ENCODE measurements at regions of chr19 and their contacts with region 1.

Region 1: DNA sequence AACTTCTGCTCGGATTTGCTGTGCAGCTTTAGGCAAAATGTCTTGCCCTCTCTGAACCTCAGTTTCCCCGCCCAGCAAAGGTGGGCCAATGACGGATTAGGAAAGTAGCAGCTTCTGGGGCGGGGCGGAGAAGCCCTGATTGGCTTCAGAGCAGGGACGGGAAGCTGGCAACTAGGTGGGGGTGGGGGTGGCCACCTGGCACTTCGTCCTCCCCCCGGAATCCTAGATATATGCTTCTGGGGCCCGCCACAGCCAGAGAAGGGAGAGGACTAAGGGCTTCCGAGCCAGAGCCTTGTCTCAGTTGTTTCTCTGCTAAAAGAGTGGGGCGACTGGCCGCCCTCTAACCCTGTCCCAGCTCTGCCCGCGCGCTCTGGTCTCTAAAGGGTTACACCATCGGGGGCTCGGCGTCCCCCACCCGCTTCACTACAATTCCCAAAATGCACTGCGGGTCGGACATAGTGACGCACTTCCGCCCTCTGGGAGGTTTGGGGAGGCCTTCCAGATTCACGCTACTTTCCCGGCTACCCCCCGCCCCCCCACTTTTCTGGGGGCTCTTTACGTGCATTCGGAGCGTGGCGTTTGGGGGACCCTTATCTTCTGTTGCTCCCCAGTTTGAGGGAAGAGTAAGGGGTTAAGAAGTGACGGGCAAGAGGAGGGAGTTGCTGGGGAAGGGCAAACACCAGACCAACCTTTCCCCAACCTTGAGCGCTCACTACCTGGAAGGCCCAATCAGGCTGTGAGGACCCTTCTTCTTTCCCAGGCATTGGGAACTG is 672 bp upstream of the IRF2BP1 start:
- DNase-seq: peak; percentile 82 to 89
- ATAC-seq: peak; percentile 89 to 91
- H3K4me3 ChIP-seq: peak overlapping the region; percentile 63 to 84 (median 66)
- H3K27ac ChIP-seq: peak overlapping the region; percentile 86 to 95 (median 92)
- H3K4me1 ChIP-seq: peaks cover 34 to 43% of the 10 kb centered on the region in 2 donors
- H3K27me3 ChIP-seq: no peaks in the 10 kb centered on the region
- CTCF ChIP-seq: peak in 1 of 5 experiments; percentile 11
- POLR2A ChIP-seq: peak; percentile 49 to 63

Region 2: GRCh38 chr19:45817010-45817724 is 69.4 kb before region 1 on chr19:
- in situ Hi-C with region 1: no loop called
- intact Hi-C with region 1: loop called (anchors 2 kb)
- DNase-seq: peak; percentile 78 to 88
- ATAC-seq: peak; percentile 85 to 95
- H3K4me3 ChIP-seq: no peak overlapping the region
- H3K27ac ChIP-seq: no peak overlapping the region
- H3K4me1 ChIP-seq: peaks cover 0 to 3% of the 10 kb centered on the region in 2 donors
- H3K27me3 ChIP-seq: peaks cover 0 to 11% (median 5%) of the 10 kb centered on the region in 3 donors
- CTCF ChIP-seq: peak; percentile 87 to 96 (median 92)
- POLR2A ChIP-seq: no peak

Region 3: GRCh38 chr19:45862564-45863334 is 23.9 kb before region 1 on chr19 and contains the start of gene SYMPK:
- in situ Hi-C with region 1: no loop called
- intact Hi-C with region 1: loop called (anchors 1 kb)
- DNase-seq: peak; percentile 98 to 99
- ATAC-seq: peak; percentile 99
- H3K4me3 ChIP-seq: peak within 1 kb of the TSS; percentile 62 to 95 (median 86)
- H3K27ac ChIP-seq: peak within 1 kb of the TSS; percentile 85 to 95 (median 90)
- H3K4me1 ChIP-seq: peaks cover 17 to 22% of the 10 kb centered on the region in 2 donors
- H3K27me3 ChIP-seq: peaks cover 10 to 16% (median 10%) of the 10 kb centered on the region in 3 donors
- CTCF ChIP-seq: no peak
- POLR2A ChIP-seq: peak; percentile 62 to 82
- total RNA-seq, gene SYMPK: 14.1 to 64.6 (median 34.9) TPM

Region 4: DNA sequence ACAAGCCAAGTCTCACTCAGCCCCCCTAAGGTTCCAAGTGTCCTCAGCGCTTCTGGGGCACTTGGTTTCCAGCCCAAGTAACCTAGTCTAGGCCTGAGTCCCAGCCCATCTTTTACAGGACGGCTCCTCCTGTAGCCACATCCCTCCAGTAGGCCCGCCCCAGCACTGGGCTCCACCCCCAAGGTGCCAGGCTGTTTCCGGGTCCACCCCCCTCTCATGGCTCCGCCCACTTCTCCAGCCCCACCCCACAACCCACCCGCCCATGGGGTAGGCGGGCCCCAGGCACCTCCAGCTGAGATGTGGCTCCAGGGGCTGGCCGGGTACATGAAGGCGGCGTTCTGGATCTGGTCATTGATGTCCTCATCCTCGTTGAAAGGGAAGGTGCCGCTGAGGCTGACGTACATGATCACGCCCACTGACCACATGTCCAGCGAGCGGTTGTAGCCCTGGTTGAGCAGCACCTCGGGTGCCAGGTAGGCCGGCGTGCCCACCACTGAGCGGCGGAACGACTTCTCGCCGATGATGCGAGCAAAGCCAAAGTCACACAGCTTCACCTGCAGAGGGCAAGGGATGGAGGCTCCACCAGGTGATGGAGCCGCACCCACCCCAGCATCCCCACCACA is 791.6 kb after region 1 on chr19:
- in situ Hi-C with region 1: no loop called
- intact Hi-C with region 1: no loop called
- DNase-seq: no peak
- ATAC-seq: no peak
- H3K4me3 ChIP-seq: no peak overlapping the region
- H3K27ac ChIP-seq: no peak overlapping the region
- H3K4me1 ChIP-seq: no peaks in the 10 kb centered on the region
- H3K27me3 ChIP-seq: no peaks in the 10 kb centered on the region
- CTCF ChIP-seq: no peak
- POLR2A ChIP-seq: no peak

Region 5: DNA sequence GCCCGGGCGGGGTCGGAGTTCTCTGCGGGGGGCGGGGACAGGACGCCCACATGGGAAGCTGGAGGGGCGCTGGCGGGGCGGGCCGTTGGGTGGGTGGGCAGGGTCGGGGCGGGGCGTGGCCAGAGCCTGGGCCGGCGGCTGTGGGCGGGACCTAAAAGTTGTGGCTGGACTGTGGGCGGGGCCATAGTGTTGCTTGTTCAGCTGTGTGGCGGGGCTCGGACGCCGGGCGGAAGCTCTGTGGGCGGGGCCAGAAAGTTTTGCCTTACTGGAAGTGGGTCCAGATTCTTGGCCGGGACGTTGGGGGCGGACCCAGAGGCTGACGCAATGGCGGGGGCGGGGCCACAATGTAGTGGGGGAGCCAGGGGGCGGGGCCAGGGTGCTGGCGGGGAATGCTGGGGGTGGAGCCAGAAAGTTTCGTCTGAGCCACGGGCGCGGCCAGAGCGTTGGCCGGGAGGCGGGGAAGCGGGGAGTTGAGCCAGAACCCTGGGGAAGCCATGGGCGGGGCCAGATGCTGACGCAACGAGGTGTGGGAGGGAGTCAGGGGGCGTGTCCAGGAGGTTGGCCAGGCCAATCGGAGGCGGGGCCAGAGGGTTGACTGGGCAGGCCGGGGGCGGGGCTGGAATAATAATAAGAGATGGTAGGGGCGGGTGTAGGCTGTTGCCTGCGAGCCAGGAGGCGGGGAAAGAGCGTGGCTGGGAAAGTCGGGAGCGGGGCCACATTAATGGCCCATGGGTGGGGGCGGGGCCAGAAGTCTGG is 1370.3 kb after region 1 on chr19:
- in situ Hi-C with region 1: no loop called
- intact Hi-C with region 1: loop called (anchors 1 kb)
- DNase-seq: peak; percentile 100
- ATAC-seq: peak; percentile 78 to 84
- H3K4me3 ChIP-seq: peak overlapping the region; percentile 50 to 72 (median 70)
- H3K27ac ChIP-seq: peak overlapping the region; percentile 82 to 95 (median 91)
- H3K4me1 ChIP-seq: peaks cover 16% of the 10 kb centered on the region in 2 donors
- H3K27me3 ChIP-seq: no peaks in the 10 kb centered on the region
- CTCF ChIP-seq: no peak
- POLR2A ChIP-seq: no peak

Measured in gastrocnemius medialis (tissue), 4 donors.